CD8-positive, alpha-beta T cell (primary cell): ENCODE measurements at regions of chr16 and their contacts with region 1.

Region 1: GRCh38 chr16:86519649-86520316 is 9.5 kb downstream of the FOXF1 start:
- DNase-seq: peak; percentile 16 to 74 (median 54)
- ATAC-seq: no peak
- H3K4me3 ChIP-seq: no peak overlapping the region
- H3K4me3 Mint-ChIP-seq: no peak overlapping the region
- H3K27ac ChIP-seq: no peak overlapping the region
- H3K27ac Mint-ChIP-seq: no peak overlapping the region
- H3K4me1 ChIP-seq: peaks cover 8% of the 10 kb centered on the region
- H3K4me1 Mint-ChIP-seq: peaks cover 3% of the 10 kb centered on the region
- H3K27me3 ChIP-seq: peaks cover 0 to 10% of the 10 kb centered on the region in 2 experiments
- H3K27me3 Mint-ChIP-seq: peaks cover 46% of the 10 kb centered on the region
- CTCF ChIP-seq: peak; percentile 78

Region 2: GRCh38 chr16:86072328-86073102 is 447.3 kb before region 1 on chr16:
- CTCF ChIA-PET with region 1: no interaction called
- POLR2A ChIA-PET with region 1: no interaction called
- intact Hi-C with region 1: loop called in 1 of 2 experiments (anchors 5 kb)
- DNase-seq: peak in 4 of 9 experiments; percentile 22 to 42 (median 28)
- ATAC-seq: no peak
- H3K4me3 ChIP-seq: no peak overlapping the region
- H3K4me3 Mint-ChIP-seq: no peak overlapping the region
- H3K27ac ChIP-seq: no peak overlapping the region
- H3K27ac Mint-ChIP-seq: no peak overlapping the region
- H3K4me1 ChIP-seq: no peaks in the 10 kb centered on the region
- H3K4me1 Mint-ChIP-seq: no peaks in the 10 kb centered on the region
- H3K27me3 ChIP-seq: no peaks in the 10 kb centered on the region
- H3K27me3 Mint-ChIP-seq: peaks cover 32% of the 10 kb centered on the region
- CTCF ChIP-seq: peak; percentile 52

Region 3: GRCh38 chr16:86118467-86119307 is 401.1 kb before region 1 on chr16:
- CTCF ChIA-PET with region 1: no interaction called
- POLR2A ChIA-PET with region 1: no interaction called
- intact Hi-C with region 1: no loop called
- DNase-seq: no peak
- ATAC-seq: no peak
- H3K4me3 ChIP-seq: no peak overlapping the region
- H3K4me3 Mint-ChIP-seq: no peak overlapping the region
- H3K27ac ChIP-seq: no peak overlapping the region
- H3K27ac Mint-ChIP-seq: no peak overlapping the region
- H3K4me1 ChIP-seq: peaks cover 4% of the 10 kb centered on the region
- H3K4me1 Mint-ChIP-seq: no peaks in the 10 kb centered on the region
- H3K27me3 ChIP-seq: no peaks in the 10 kb centered on the region
- H3K27me3 Mint-ChIP-seq: peaks cover 16% of the 10 kb centered on the region
- CTCF ChIP-seq: no peak

Region 4: GRCh38 chr16:86343027-86343787 is 176.6 kb before region 1 on chr16:
- CTCF ChIA-PET with region 1: no interaction called
- POLR2A ChIA-PET with region 1: no interaction called
- intact Hi-C with region 1: loop called in 1 of 2 experiments (anchors 5 kb)
- DNase-seq: no peak
- ATAC-seq: no peak
- H3K4me3 ChIP-seq: no peak overlapping the region
- H3K4me3 Mint-ChIP-seq: no peak overlapping the region
- H3K27ac ChIP-seq: no peak overlapping the region
- H3K27ac Mint-ChIP-seq: no peak overlapping the region
- H3K4me1 ChIP-seq: no peaks in the 10 kb centered on the region
- H3K4me1 Mint-ChIP-seq: no peaks in the 10 kb centered on the region
- H3K27me3 ChIP-seq: peaks cover 0 to 7% of the 10 kb centered on the region in 2 experiments
- H3K27me3 Mint-ChIP-seq: peaks cover 37% of the 10 kb centered on the region
- CTCF ChIP-seq: no peak

Region 5: GRCh38 chr16:86531641-86532525 is 12.1 kb after region 1 on chr16:
- CTCF ChIA-PET with region 1: interaction called, 10 read pairs
- POLR2A ChIA-PET with region 1: no interaction called
- intact Hi-C with region 1: no loop called
- DNase-seq: no peak
- ATAC-seq: no peak
- H3K4me3 ChIP-seq: no peak overlapping the region
- H3K4me3 Mint-ChIP-seq: no peak overlapping the region
- H3K27ac ChIP-seq: no peak overlapping the region
- H3K27ac Mint-ChIP-seq: no peak overlapping the region
- H3K4me1 ChIP-seq: no peaks in the 10 kb centered on the region
- H3K4me1 Mint-ChIP-seq: no peaks in the 10 kb centered on the region
- H3K27me3 ChIP-seq: no peaks in the 10 kb centered on the region
- H3K27me3 Mint-ChIP-seq: no peaks in the 10 kb centered on the region
- CTCF ChIP-seq: no peak

Region 6: DNA sequence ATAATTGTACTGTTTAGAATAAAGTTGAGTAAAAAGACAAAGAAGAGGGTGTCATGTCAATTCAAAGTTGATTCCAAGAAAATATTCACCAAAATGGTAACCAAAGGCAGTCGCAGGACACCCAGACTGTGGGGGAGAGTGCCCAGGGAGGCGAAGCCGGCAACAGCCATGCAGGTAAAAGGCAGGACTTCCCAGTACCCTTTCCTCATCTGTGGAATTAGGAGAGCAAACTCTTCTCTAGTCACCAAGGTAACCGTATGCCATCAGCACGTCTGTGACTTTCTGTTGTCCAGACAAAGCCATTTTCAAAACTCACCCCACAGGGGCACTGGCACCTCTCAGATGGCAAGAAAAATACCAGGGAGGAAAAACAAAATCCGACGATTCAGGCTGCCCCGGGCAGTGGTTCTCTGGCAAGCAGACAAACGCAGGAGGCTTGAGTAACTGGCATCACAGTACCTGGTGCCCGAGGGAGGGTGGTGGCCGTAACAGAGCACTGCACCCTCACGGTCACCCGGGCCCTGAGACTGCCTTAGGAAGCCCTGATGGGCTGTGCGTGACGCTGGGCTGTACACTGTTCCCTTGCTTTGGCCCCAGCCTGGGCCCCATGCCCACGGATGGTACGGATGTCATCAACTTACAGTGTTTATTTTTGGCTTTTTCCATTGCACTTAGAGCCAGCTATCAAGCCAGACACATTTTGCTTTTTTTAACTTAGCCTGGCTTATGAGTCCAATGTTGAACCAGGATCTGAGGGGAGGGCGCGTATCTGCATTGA is 345.9 kb after region 1 on chr16:
- CTCF ChIA-PET with region 1: no interaction called
- POLR2A ChIA-PET with region 1: no interaction called
- intact Hi-C with region 1: no loop called
- DNase-seq: no peak
- ATAC-seq: no peak
- H3K4me3 ChIP-seq: no peak overlapping the region
- H3K4me3 Mint-ChIP-seq: no peak overlapping the region
- H3K27ac ChIP-seq: no peak overlapping the region
- H3K27ac Mint-ChIP-seq: no peak overlapping the region
- H3K4me1 ChIP-seq: no peaks in the 10 kb centered on the region
- H3K4me1 Mint-ChIP-seq: no peaks in the 10 kb centered on the region
- H3K27me3 ChIP-seq: no peaks in the 10 kb centered on the region
- H3K27me3 Mint-ChIP-seq: peaks cover 2% of the 10 kb centered on the region
- CTCF ChIP-seq: no peak